ENCODE measurements at regions of chr5 and their contacts with region 1.

Region 1: DNA sequence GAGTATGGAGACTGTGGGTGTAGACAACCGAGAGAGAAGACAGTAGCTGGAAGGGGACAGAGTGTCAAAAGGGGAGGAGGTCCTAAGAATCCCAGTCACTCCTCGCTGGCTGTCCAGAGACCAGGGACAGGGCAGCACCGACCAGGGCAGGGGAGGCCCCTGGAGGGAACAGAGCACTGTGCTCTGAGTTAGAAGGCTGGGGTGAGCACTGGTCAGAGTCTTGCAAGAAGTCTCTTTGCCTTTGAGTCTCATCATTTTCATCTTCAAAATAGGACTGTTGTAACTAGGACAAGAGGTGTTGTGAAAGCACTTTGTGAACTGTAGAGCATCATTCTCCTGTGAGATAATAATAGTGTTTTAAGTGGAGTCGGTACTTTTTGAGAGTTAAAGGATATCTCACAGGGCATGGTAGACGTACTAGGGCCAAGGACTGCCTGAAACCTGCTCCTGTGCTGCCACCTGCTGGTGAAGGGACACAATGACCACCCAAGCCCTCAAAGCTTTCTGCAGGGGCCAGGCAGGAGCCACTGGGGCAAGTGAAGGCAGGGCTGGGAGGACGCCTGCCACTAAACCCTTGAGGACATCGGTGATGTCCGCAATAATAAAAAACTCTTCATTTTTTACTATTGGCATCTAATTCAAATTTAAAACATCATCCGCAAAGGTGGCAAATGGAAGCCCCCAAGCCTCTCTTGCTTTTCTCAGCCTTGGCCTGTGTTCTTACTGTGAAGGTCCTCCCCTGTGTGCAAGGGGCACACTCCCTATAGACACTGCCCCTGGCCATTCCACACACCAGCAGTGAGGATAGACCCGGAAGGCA is 28.2 kb downstream of the SLC6A7 start:
- DNase-seq: peak; percentile 89
- H3K4me3 Mint-ChIP-seq: no peak overlapping the region
- H3K27ac Mint-ChIP-seq: no peak overlapping the region
- H3K4me1 Mint-ChIP-seq: no peaks in the 10 kb centered on the region
- H3K27me3 Mint-ChIP-seq: peaks cover 40% of the 10 kb centered on the region

Region 2: GRCh38 chr5:150129813-150130492 is 88.1 kb before region 1 on chr5:
- CTCF ChIA-PET with region 1: interaction called, 26 read pairs
- DNase-seq: peak; percentile 71
- H3K4me3 Mint-ChIP-seq: no peak overlapping the region
- H3K27ac Mint-ChIP-seq: no peak overlapping the region
- H3K4me1 Mint-ChIP-seq: peaks cover 2% of the 10 kb centered on the region
- H3K27me3 Mint-ChIP-seq: peaks cover 6% of the 10 kb centered on the region

Region 3: DNA sequence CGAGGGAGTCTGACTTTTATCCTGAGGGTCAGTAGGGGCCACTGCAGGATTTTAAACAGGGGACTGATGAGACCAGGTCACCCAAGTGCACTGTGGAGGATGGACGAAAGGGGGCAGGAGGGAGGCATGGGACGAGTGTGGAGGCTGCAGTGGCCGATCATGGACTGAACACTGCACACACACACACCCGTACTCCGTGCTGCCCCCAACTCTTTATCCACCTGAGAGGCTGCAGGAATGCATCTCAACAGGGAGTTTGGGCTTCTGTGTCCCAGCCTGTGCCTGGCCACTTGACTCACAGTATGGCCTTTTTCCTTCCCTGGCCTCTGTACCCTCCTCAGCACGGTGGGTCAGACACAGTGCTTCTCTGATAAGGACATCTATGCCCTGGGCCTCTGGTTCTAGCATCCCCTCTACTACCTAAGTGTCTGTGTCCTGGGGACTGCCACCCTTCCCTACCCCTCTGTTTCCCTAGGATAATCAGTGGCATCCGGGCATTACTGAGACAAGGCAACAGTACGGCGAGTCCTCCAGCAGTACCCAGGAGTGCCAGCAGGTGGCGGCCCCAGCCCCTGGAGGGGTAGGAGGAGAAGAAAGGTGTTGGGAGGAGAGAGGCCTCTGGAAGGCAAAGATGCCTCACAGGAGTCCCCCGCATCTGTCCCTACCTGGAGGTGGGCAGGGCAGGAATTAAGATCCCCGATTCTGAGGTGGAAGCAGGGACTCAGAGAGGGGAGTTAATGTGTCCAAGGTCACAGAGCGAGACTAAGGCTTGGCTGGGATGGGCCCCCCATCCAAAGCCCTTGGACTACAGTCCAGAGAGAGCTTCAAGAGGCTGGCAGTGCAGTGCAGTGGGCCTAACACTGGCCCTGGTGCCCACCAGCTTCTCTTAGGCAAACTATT is 56.6 kb before region 1 on chr5:
- CTCF ChIA-PET with region 1: interaction called, 12 read pairs
- DNase-seq: peak; percentile 85
- H3K4me3 Mint-ChIP-seq: no peak overlapping the region
- H3K27ac Mint-ChIP-seq: no peak overlapping the region
- H3K4me1 Mint-ChIP-seq: no peaks in the 10 kb centered on the region
- H3K27me3 Mint-ChIP-seq: peaks cover 62% of the 10 kb centered on the region